Activated naive CD4-positive, alpha-beta T cell treated with anti-CD3 and anti-CD28 coated beads, Interleukin-2, amount 10 ng/mL, durations not matched to agents 7 days and 5 days (primary cell): ENCODE measurements at regions of chr14 and their contacts with region 1.

Region 1: GRCh38 chr14:90697577-90698206 is 118.5 kb downstream of the TTC7B start:
- DNase-seq: peak; percentile 82
- H3K4me3 Mint-ChIP-seq: no peak overlapping the region
- H3K27ac Mint-ChIP-seq: no peak overlapping the region
- H3K4me1 Mint-ChIP-seq: peaks cover 5% of the 10 kb centered on the region
- H3K27me3 Mint-ChIP-seq: peaks cover 9% of the 10 kb centered on the region

Region 2: DNA sequence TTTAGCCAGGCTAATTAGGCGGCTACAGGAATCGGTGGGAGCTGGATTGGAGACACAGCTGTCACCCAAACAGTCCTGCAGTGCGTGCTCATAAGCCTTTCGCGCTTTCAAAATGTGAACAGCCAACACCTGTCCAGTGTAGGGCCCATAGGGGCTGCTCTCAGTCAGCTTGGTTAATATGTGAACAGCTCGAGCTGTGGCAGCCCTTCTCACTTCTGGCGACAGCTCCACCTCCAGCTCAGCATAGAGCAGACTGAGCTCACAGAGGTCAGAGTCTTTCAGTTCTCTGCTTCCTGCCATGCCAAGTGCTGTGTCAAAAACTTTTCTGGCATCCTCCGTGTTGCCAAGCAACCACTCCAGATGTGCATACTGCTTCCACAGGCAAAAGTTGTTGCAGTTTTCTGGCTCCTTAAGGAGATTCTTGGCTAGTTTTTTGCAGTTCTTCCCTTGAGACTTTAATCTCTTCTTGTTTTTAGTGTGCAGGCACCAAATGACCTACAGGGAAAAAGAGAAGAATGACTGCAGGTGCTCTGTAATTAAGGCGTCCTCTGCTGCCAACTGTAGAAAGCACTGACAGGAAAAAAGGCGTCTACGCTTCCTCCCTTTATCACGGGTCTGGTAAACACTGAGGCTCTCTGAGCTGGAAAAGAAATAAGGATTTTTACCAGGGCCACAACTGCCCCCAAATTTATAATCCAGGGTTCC is 408.9 kb before region 1 on chr14:
- CTCF ChIA-PET with region 1: interaction called, 18 read pairs
- DNase-seq: no peak
- H3K4me3 Mint-ChIP-seq: no peak overlapping the region
- H3K27ac Mint-ChIP-seq: no peak overlapping the region
- H3K4me1 Mint-ChIP-seq: no peaks in the 10 kb centered on the region
- H3K27me3 Mint-ChIP-seq: no peaks in the 10 kb centered on the region

Region 3: GRCh38 chr14:90301668-90302090 is 396.0 kb before region 1 on chr14:
- CTCF ChIA-PET with region 1: interaction called, 27 read pairs
- DNase-seq: no peak
- H3K4me3 Mint-ChIP-seq: no peak overlapping the region
- H3K27ac Mint-ChIP-seq: peak overlapping the region; percentile 3
- H3K4me1 Mint-ChIP-seq: peaks cover 8% of the 10 kb centered on the region
- H3K27me3 Mint-ChIP-seq: no peaks in the 10 kb centered on the region

Region 4: GRCh38 chr14:90399541-90400444 is 297.9 kb before region 1 on chr14:
- CTCF ChIA-PET with region 1: interaction called, 26 read pairs
- DNase-seq: peak; percentile 92
- H3K4me3 Mint-ChIP-seq: peak overlapping the region; percentile 97
- H3K27ac Mint-ChIP-seq: peak overlapping the region; percentile 100
- H3K4me1 Mint-ChIP-seq: peaks cover 57% of the 10 kb centered on the region
- H3K27me3 Mint-ChIP-seq: peaks cover 10% of the 10 kb centered on the region

Region 5: DNA sequence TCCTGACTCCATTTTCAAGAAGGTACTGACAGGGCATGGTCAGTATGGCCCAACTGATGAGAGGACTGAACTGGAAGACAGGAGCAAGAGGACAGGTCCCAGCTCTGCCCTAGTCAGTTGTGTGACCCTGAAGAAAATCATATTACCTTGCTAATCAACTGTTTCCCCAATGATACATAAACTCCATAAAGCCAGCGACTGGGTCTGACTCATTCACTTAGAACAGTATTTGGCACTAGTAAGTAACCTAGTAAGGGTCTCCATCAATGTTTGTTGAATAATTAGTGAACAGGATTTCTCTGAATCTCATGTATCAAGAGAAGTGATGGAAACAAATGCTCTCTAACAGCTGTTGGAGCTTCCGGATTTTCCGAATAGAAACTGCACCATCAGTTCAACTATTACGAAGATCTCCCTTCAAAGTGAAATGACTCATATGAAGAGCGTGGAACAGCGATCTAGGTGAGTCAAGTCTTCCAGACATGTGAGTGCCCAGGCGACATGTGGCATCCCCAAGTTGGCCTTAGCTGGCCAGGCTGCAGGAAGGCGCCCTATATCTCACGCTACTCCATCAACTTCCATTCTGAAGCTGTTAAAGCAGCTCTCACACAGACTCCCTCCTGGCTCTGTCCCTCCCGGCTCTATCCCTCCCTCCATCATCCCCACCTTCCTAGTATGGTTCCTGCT is 24.1 kb after region 1 on chr14:
- CTCF ChIA-PET with region 1: no interaction called
- DNase-seq: no peak
- H3K4me3 Mint-ChIP-seq: no peak overlapping the region
- H3K27ac Mint-ChIP-seq: no peak overlapping the region
- H3K4me1 Mint-ChIP-seq: no peaks in the 10 kb centered on the region
- H3K27me3 Mint-ChIP-seq: peaks cover 5% of the 10 kb centered on the region

Region 6: GRCh38 chr14:90758028-90758889 is 60.6 kb after region 1 on chr14:
- CTCF ChIA-PET with region 1: interaction called, 20 read pairs
- DNase-seq: peak; percentile 93
- H3K4me3 Mint-ChIP-seq: peak overlapping the region; percentile 73
- H3K27ac Mint-ChIP-seq: peak overlapping the region; percentile 81
- H3K4me1 Mint-ChIP-seq: peaks cover 17% of the 10 kb centered on the region
- H3K27me3 Mint-ChIP-seq: peaks cover 28% of the 10 kb centered on the region

Region 7: DNA sequence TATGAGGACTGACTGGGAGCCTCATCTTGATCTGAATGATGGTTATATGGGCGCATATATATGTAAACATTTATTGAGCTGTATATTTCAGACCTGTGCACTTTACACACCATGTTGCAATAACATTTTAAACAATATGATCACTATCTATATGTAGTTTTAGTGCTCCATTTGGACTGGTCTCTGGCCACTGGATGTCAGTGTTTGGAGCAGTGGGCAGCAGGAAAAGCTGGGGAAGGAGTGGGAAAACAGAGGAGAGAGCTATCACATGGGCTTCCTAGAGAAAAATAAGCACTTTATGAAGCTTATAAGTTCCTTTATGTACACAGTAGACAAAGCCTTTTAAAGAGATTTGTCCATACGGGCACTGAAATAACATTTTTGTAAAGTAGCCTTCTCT is 167.8 kb after region 1 on chr14:
- CTCF ChIA-PET with region 1: no interaction called
- DNase-seq: no peak
- H3K4me3 Mint-ChIP-seq: no peak overlapping the region
- H3K27ac Mint-ChIP-seq: no peak overlapping the region
- H3K4me1 Mint-ChIP-seq: no peaks in the 10 kb centered on the region
- H3K27me3 Mint-ChIP-seq: no peaks in the 10 kb centered on the region